Activated CD4-positive, alpha-beta T cell treated with anti-CD3 and anti-CD28 coated beads for 36 hours (primary cell): ENCODE measurements at regions of chr2 and their contacts with region 1.

Region 1: DNA sequence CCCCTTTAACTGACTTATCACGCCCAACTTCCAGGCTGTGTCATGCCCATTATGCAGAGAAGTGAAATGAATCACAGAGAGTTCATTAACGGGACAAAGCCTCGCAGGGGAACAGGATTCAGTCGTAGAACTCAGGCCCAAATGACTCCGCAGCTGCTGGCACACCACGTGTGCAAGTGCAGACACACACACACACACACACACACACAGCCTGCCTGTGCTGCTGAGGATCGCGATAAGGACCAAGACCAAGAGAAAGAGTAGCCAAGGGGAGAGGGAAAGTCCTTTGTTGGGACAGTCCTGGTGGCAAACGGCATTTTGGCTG is 90.0 kb upstream of the TAF1B start:
- DNase-seq: peak; percentile 84
- ATAC-seq: peak; percentile 84
- H3K4me3 Mint-ChIP-seq: peak overlapping the region; percentile 66
- H3K27ac Mint-ChIP-seq: peak overlapping the region; percentile 96
- H3K4me1 Mint-ChIP-seq: peaks cover 61% of the 10 kb centered on the region
- H3K27me3 Mint-ChIP-seq: peaks cover 18% of the 10 kb centered on the region

Region 2: GRCh38 chr2:9594366-9595054 is 158.7 kb before region 1 on chr2:
- CTCF ChIA-PET with region 1: interaction called, 3 read pairs
- POLR2A ChIA-PET with region 1: interaction called, 7 read pairs
- intact Hi-C with region 1: loop called (anchors 1 kb)
- DNase-seq: peak; percentile 21
- ATAC-seq: peak; percentile 89
- H3K4me3 Mint-ChIP-seq: no peak overlapping the region
- H3K27ac Mint-ChIP-seq: peak overlapping the region; percentile 82
- H3K4me1 Mint-ChIP-seq: peaks cover 83% of the 10 kb centered on the region
- H3K27me3 Mint-ChIP-seq: no peaks in the 10 kb centered on the region

Region 3: GRCh38 chr2:9656270-9656766 is 96.9 kb before region 1 on chr2:
- CTCF ChIA-PET with region 1: interaction called, 6 read pairs
- POLR2A ChIA-PET with region 1: no interaction called
- intact Hi-C with region 1: loop called (anchors 1 kb)
- DNase-seq: peak; percentile 86
- ATAC-seq: peak; percentile 87
- H3K4me3 Mint-ChIP-seq: peak overlapping the region; percentile 26
- H3K27ac Mint-ChIP-seq: peak overlapping the region; percentile 89
- H3K4me1 Mint-ChIP-seq: peaks cover 37% of the 10 kb centered on the region
- H3K27me3 Mint-ChIP-seq: peaks cover 10% of the 10 kb centered on the region

Region 4: GRCh38 chr2:9708683-9709538 is 44.3 kb before region 1 on chr2:
- CTCF ChIA-PET with region 1: interaction called, 3 read pairs
- POLR2A ChIA-PET with region 1: interaction called, 9 read pairs
- intact Hi-C with region 1: loop called (anchors 1 to 2 kb)
- DNase-seq: peak; percentile 71
- ATAC-seq: peak; percentile 63
- H3K4me3 Mint-ChIP-seq: peak overlapping the region; percentile 10
- H3K27ac Mint-ChIP-seq: peak overlapping the region; percentile 92
- H3K4me1 Mint-ChIP-seq: peaks cover 56% of the 10 kb centered on the region
- H3K27me3 Mint-ChIP-seq: no peaks in the 10 kb centered on the region

Region 5: GRCh38 chr2:9770308-9771100 is 17.3 kb after region 1 on chr2:
- CTCF ChIA-PET with region 1: interaction called, 7 read pairs
- POLR2A ChIA-PET with region 1: interaction called, 10 read pairs
- intact Hi-C with region 1: no loop called
- DNase-seq: peak; percentile 73
- ATAC-seq: peak; percentile 74
- H3K4me3 Mint-ChIP-seq: no peak overlapping the region
- H3K27ac Mint-ChIP-seq: no peak overlapping the region
- H3K4me1 Mint-ChIP-seq: peaks cover 13% of the 10 kb centered on the region
- H3K27me3 Mint-ChIP-seq: no peaks in the 10 kb centered on the region

Region 6: DNA sequence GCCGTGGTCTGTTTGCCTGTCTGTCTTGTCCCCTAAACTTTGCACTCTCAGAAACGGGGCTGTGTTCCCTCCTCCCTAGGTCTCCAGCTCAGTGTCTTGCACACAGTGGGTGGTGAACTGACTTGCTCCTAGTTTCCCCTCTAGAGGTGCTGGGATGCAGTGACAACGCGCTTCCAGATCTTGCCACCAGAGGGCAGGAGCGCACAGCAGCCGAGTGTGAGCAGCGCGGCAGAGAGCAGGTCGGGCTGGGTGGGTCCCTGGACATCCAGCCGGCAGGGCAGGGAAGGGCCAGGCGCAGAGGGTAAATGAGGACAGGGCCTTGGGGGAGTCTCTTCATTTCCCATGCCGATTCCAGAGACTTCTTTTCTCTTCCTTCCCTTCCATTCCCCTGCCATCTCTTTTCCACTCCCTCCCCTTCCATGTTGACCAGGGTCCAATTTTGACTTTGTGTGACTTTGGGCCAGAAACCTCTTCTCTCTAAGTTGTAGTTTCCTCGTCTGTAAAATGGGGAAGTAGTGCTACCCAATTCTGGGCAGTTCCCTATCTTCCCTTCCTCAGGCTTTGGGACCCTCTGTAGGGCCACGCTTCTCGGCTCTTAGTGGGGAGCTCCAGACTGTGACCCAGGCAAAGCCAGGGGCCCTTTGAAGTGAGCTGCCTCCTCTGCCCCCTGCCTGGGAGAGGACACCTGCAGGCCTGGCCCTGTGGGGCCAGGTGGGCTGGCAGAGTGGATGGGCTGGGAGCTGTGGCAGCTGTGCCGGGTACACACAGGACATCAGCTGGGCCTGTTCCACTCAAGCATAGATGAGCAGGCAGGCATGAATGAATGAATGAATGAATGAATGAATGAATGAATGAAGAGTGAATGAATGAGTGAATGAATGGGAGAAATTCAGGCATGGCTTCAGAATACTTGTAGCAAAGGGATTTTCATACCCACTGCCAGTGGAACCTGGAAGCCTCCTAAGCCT is 46.7 kb after region 1 on chr2:
- CTCF ChIA-PET with region 1: interaction called, 15 read pairs
- POLR2A ChIA-PET with region 1: no interaction called
- intact Hi-C with region 1: no loop called
- DNase-seq: peak; percentile 93
- ATAC-seq: peak; percentile 92
- H3K4me3 Mint-ChIP-seq: peak overlapping the region; percentile 39
- H3K27ac Mint-ChIP-seq: peak overlapping the region; percentile 86
- H3K4me1 Mint-ChIP-seq: peaks cover 24% of the 10 kb centered on the region
- H3K27me3 Mint-ChIP-seq: peaks cover 2% of the 10 kb centered on the region